Ovary (tissue), 10 donors: ENCODE measurements at regions of chr7 and their contacts with region 1.

Region 1: GRCh38 chr7:148954766-148955165 is 70.7 kb upstream of the EZH2 start:
- DNase-seq: peak in 1 of 5 donors; percentile 3
- H3K4me3 ChIP-seq: no peak overlapping the region
- H3K27ac ChIP-seq: no peak overlapping the region
- H3K4me1 ChIP-seq: no peaks in the 10 kb centered on the region
- H3K27me3 ChIP-seq: no peaks in the 10 kb centered on the region
- CTCF ChIP-seq: no peak
- EP300 ChIP-seq: no peak
- POLR2A ChIP-seq: no peak

Region 2: DNA sequence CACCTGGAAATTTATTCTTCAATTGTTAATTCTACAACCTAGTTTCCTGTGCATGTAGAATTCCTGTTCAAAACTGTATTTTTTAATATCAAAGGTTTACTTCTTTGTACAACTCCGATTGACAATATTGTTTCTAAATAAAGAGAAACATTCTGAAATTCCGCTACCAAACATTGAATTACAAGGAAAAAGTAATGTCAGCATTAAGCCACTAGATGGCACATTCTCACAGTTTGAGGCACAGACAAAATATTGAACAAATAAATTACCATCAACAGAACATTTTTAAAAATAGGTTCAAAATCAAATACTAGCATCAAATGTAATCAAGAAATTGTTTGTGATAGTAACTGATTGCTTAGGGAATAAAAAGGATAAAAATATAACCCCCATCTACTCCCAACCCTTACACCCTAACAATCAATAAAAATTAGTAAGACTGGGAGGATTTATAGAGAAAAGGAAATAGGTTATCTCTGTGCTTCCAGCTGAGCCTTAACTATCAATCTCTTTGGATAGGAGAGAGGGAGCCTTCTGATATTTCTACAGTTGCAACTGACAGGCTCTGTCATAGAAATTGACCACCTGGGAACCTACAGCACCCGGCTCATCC is 450.8 kb before region 1 on chr7:
- intact Hi-C with region 1: loop called in 1 of 4 experiments (anchors 10 kb)
- DNase-seq: no peak
- H3K4me3 ChIP-seq: no peak overlapping the region
- H3K27ac ChIP-seq: no peak overlapping the region
- H3K4me1 ChIP-seq: no peaks in the 10 kb centered on the region
- H3K27me3 ChIP-seq: no peaks in the 10 kb centered on the region
- CTCF ChIP-seq: peak; percentile 42 to 70 (median 56)
- EP300 ChIP-seq: no peak
- POLR2A ChIP-seq: no peak

Region 3: DNA sequence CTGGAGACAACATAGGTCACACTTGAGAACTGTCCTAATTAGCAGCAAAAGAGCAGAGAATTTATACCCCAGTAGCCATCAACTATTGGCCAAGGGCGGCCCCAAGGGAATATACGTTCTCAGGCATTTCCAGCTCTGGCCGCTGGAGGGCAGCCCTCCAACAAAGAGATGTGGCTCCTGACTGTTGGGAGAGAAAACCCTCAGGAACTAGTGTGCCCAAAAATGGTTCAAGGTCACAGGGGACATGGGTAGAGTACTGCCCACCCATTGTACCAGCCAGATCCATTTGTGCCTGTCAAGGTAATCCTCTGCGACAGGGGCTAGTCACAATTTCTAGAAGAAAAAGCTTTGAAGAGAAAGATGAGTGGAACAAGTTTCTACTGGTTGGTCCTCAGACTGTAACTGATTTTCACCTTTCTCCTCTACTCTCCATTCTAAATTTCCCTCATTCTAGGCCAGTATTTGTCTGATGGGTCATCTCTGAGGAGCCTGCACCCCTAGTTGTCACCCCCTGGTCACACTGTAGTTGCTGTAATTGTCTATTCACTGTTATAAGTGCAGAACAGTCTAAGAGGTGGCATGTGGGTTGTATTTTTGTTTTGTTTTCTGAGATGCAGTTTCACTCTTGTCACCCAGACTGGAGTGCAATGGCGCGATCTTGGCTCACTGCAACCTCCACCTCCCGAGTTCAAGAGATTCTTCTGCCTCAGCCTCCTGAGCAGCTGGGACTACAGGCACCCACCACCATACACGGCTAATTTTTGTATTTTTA is 378.9 kb before region 1 on chr7:
- intact Hi-C with region 1: loop called in 1 of 4 experiments (anchors 5 kb)
- DNase-seq: peak; percentile 29 to 70 (median 42)
- H3K4me3 ChIP-seq: no peak overlapping the region
- H3K27ac ChIP-seq: no peak overlapping the region
- H3K4me1 ChIP-seq: no peaks in the 10 kb centered on the region
- H3K27me3 ChIP-seq: no peaks in the 10 kb centered on the region
- CTCF ChIP-seq: peak in 1 of 3 donors; percentile 46
- EP300 ChIP-seq: no peak
- POLR2A ChIP-seq: no peak

Region 4: DNA sequence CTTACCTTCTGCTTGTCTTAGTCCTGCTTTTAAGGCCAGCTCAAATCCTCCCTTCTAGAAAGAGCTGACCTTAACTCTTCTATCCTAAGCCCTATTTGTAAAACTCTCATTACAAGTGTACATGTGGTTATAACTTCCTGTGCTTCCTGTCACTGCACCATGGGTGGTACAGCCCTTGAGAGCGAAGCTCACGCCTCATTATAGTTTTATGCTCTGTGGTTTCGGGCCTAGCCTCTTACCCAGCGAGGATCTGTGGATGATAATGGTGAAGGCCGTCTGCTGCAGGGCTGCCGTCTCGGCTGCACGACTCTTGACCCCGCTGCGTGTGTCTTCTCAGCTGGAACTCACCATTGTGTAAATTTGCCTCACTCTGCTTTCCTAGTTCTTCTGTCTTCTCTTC is 181.4 kb before region 1 on chr7:
- intact Hi-C with region 1: no loop called
- DNase-seq: no peak
- H3K4me3 ChIP-seq: no peak overlapping the region
- H3K27ac ChIP-seq: no peak overlapping the region
- H3K4me1 ChIP-seq: no peaks in the 10 kb centered on the region
- H3K27me3 ChIP-seq: no peaks in the 10 kb centered on the region
- CTCF ChIP-seq: no peak
- EP300 ChIP-seq: no peak
- POLR2A ChIP-seq: no peak

Region 5: GRCh38 chr7:148987010-148987750 is 32.4 kb after region 1 on chr7:
- intact Hi-C with region 1: no loop called
- DNase-seq: peak; percentile 77 to 87 (median 80)
- H3K4me3 ChIP-seq: peak overlapping the region; percentile 65
- H3K27ac ChIP-seq: peak overlapping the region; percentile 85 to 87
- H3K4me1 ChIP-seq: peaks cover 2% of the 10 kb centered on the region
- H3K27me3 ChIP-seq: no peaks in the 10 kb centered on the region
- CTCF ChIP-seq: no peak
- EP300 ChIP-seq: no peak
- POLR2A ChIP-seq: no peak

Region 6: DNA sequence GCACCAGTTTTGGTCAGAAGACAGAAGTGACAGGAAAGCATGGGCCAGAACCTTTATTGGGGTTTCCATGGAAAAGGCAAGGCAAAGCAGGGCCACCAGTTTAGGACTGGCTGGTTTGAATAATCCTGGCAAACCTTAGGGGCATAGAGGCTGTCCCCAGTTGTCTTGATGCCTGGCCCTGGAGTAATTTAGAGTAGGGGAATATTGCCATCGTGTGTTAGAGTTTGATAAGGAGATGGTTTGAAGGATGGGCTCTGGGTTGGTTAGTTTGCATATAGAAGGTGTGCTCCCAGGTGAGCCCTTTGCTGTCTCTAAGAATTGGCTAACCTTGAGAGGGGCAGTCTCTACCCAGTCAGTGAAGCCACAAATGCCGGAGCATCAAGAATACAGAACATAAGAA is 426.5 kb after region 1 on chr7:
- intact Hi-C with region 1: no loop called
- DNase-seq: no peak
- H3K4me3 ChIP-seq: no peak overlapping the region
- H3K27ac ChIP-seq: no peak overlapping the region
- H3K4me1 ChIP-seq: no peaks in the 10 kb centered on the region
- H3K27me3 ChIP-seq: no peaks in the 10 kb centered on the region
- CTCF ChIP-seq: no peak
- EP300 ChIP-seq: no peak
- POLR2A ChIP-seq: no peak